ENCODE measurements at regions of chr10 and their contacts with region 1.

Region 1: GRCh38 chr10:70815504-70816219 is at the start of gene SGPL1:
- DNase-seq: peak; percentile 86
- H3K4me3 Mint-ChIP-seq: peak within 1 kb of the TSS; percentile 82
- H3K27ac Mint-ChIP-seq: peak within 1 kb of the TSS; percentile 76
- H3K4me1 Mint-ChIP-seq: peaks cover 37% of the 10 kb centered on the region
- H3K27me3 Mint-ChIP-seq: no peaks in the 10 kb centered on the region
- total RNA-seq, gene SGPL1: 14.8 to 17.2 TPM

Region 2: DNA sequence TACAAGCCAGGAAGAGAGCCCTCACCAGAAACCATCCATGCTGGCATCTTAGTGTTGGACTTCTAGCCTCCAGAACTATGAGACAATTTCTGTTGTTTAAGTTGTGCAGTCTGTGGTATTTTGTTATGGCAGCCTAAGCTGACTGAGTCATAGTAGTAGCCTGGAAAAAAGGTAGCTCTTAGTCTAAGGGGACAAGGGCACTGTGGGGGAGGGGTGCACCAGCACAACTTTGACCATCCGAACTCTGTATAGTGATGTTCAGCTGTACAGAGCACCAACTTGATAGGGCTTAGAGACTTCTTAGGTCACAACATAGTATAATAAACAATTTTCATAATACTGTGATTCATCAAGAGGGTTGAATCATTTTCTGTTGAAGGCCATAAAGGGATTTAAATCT is 397.4 kb before region 1 on chr10:
- CTCF ChIA-PET with region 1: no interaction called
- intact Hi-C with region 1: no loop called
- DNase-seq: no peak
- H3K4me3 Mint-ChIP-seq: no peak overlapping the region
- H3K27ac Mint-ChIP-seq: peak overlapping the region; percentile 23
- H3K4me1 Mint-ChIP-seq: peaks cover 25% of the 10 kb centered on the region
- H3K27me3 Mint-ChIP-seq: no peaks in the 10 kb centered on the region

Region 3: DNA sequence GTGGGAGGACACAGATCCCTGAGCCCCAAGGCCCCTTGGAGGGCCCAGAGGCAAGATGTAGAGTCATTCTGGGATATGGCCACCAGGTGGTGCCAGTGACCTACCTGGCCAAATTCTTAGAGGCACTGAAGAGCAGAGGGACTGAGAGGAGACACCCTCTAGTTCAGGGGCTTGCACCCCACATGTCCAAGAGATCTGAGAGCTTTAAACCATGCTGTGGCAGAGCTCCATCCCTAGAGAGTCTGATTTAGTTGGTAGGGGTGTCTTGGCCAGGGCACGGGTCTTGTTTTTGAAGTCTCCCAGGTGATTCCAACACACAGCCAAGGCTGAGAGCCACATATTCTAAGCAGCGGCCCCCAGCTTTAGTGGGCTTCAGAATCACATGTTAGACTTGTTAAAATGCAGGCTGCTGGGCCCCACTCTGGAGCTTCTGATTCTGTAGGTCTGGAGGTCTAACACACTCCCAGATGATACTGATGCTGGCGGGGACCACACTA is 265.7 kb before region 1 on chr10:
- CTCF ChIA-PET with region 1: interaction called, 4 read pairs
- intact Hi-C with region 1: loop called (anchors 2 kb)
- DNase-seq: peak; percentile 82
- H3K4me3 Mint-ChIP-seq: no peak overlapping the region
- H3K27ac Mint-ChIP-seq: no peak overlapping the region
- H3K4me1 Mint-ChIP-seq: no peaks in the 10 kb centered on the region
- H3K27me3 Mint-ChIP-seq: no peaks in the 10 kb centered on the region

Region 4: DNA sequence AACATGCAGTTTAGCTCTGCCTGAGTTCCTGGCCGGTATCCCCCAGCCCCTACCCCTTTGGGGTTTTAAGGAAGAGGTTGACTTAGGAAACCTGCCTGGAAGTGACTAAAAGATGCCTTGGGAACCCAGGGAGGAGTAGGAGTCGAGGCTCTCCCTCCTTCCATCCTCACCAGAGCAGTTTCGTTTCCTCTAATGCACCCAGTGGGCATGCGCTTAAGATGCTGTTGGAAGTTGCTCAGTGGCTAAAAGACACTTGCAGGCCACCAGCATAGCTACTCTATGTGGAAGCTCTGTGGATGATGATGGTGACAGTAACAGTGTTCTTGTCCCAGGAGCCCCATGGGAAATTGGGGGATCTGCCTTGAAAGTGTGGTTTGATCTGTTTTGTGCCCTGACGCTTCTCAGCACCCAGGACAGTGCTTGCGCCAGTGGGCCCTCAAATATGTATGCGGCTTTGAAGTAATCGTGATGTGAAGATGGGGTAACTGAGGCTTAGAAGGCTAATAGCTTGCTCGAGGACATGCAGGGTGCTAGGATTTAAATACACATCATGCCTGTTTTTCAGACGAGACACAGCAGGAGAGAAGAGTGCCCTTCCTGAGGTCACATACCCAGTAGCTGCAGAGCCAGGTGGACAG is 62.5 kb before region 1 on chr10:
- CTCF ChIA-PET with region 1: no interaction called
- intact Hi-C with region 1: no loop called
- DNase-seq: no peak
- H3K4me3 Mint-ChIP-seq: no peak overlapping the region
- H3K27ac Mint-ChIP-seq: no peak overlapping the region
- H3K4me1 Mint-ChIP-seq: no peaks in the 10 kb centered on the region
- H3K27me3 Mint-ChIP-seq: no peaks in the 10 kb centered on the region

Region 5: DNA sequence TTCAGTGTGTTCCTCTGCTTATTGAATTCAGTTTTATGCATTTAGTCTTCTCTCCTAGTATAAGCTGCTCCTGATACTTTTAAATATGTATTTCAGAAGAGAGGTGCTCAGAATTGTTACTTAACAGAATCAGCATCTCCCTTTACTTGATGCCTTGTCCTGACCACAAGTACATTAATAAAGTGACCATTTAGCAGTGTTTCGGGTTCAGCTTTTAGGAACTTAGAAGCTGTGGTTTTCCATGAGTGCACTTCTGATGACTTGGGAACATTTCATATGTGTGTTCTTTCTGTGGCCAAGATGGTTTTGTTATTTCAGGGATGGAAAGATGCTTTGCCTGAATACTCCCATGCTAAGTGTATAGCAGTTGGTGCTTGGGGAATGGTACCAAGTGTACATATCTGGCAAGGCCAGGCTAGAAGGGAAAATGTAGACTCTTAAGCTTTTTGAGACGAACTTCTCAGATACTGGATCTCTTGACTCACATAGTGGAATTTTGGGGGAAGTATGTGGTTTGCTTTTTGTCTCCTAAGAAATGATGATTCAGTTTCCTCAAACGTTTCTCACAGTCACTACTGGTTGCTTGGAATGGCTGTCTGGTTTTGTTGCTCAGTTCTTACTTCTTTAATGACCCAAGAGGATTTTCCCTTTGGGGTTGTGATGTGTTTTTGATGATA is 17.3 kb after region 1 on chr10:
- CTCF ChIA-PET with region 1: interaction called, 4 read pairs
- intact Hi-C with region 1: loop called (anchors 2 kb)
- DNase-seq: peak; percentile 20
- H3K4me3 Mint-ChIP-seq: no peak overlapping the region
- H3K27ac Mint-ChIP-seq: peak overlapping the region; percentile 57
- H3K4me1 Mint-ChIP-seq: peaks cover 45% of the 10 kb centered on the region
- H3K27me3 Mint-ChIP-seq: no peaks in the 10 kb centered on the region

Region 6: DNA sequence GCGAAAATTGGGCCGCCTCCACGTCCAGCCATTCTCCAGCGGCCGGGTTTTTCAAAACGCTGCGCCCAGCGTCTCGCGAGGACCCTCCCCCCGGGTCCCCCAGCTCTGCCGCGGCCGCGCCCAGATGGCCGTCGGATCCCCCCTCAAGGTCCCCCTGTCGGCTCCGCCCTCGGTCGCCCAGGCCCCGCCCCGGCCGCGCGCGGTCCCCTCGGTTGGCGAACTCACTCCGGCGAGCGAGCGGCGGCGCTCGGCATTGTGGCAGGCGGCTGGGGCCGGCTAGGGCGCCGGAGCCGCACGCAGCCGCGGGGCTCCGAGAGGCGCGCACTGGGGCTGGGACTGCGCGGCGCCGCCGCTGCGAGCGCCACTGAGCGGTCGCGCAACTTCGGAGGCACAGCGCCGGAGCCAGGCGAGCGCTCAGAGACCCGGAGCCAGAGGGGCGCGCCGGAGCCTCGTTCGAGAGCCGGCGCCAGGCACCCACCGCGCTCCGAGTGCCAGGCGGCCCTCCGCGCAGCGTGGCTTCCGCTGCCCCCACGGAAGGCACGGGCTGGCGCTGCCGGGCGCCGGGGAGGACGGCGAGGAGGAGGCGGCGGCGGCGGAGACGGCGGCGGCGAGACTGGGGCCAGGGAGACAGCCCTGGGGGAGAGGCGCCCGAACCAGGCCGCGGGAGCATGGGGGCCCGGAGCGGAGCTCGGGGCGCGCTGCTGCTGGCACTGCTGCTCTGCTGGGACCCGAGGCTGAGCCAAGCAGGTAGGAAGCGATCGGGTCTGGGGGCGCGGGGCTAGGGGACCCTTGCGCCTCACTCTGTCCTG is 396.9 kb after region 1 on chr10 and contains the start of gene UNC5B:
- CTCF ChIA-PET with region 1: no interaction called
- intact Hi-C with region 1: loop called (anchors 10 kb)
- DNase-seq: peak; percentile 45
- H3K4me3 Mint-ChIP-seq: peak within 1 kb of the TSS; percentile 46
- H3K27ac Mint-ChIP-seq: no peak within 1 kb of the TSS
- H3K4me1 Mint-ChIP-seq: peaks cover 10% of the 10 kb centered on the region
- H3K27me3 Mint-ChIP-seq: peaks cover 60% of the 10 kb centered on the region
- total RNA-seq, gene UNC5B: 0.05 TPM